ENCODE measurements at regions of chrX and their contacts with region 1.

Region 1: DNA sequence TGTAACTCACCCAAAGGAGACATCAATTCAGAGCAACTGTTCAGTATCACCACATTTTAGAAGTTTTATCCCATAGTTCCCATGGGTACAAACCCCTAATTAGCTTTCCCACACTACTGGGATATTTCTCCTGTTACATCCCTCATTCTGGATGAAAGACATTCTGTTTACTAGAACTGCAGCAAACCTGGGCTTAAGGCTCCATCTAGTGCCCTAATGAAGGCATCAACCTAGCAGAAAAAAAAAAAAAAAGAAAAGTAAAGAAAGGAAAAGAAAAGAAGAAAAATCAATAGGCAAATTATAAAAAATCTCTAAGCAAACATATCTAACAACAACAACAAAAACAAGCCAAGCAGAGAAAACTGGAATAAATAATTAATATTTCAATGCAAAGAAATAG is 133.7 kb upstream of the CPXCR1 start:
- DNase-seq: peak; percentile 59

Region 2: GRCh38 chrX:88135735-88136134 is 477.6 kb before region 1 on chrX:
- in situ Hi-C with region 1: loop called (anchors 25 kb)
- DNase-seq: peak; percentile 43